Caco-2 (cell line): ENCODE measurements at regions of chr2 and their contacts with region 1.

Region 1: GRCh38 chr2:223860809-223861738 is 23.7 kb upstream of the AP1S3 start:
- DNase-seq: peak; percentile 92 to 94
- H3K4me3 ChIP-seq: no peak overlapping the region
- H3K4me3 Mint-ChIP-seq: peak overlapping the region; percentile 76
- H3K27ac Mint-ChIP-seq: peak overlapping the region; percentile 100
- H3K4me1 ChIP-seq: peaks cover 78% of the 10 kb centered on the region
- H3K4me1 Mint-ChIP-seq: peaks cover 66% of the 10 kb centered on the region
- H3K27me3 ChIP-seq: no peaks in the 10 kb centered on the region
- H3K27me3 Mint-ChIP-seq: no peaks in the 10 kb centered on the region
- CTCF ChIP-seq: peak; percentile 28 to 60

Region 2: GRCh38 chr2:223580951-223581350 is 280.1 kb before region 1 on chr2:
- CTCF ChIA-PET with region 1: no interaction called
- POLR2A ChIA-PET with region 1: no interaction called
- intact Hi-C with region 1: no loop called
- DNase-seq: no peak
- H3K4me3 ChIP-seq: no peak overlapping the region
- H3K4me3 Mint-ChIP-seq: no peak overlapping the region
- H3K27ac Mint-ChIP-seq: no peak overlapping the region
- H3K4me1 ChIP-seq: no peaks in the 10 kb centered on the region
- H3K4me1 Mint-ChIP-seq: no peaks in the 10 kb centered on the region
- H3K27me3 ChIP-seq: no peaks in the 10 kb centered on the region
- H3K27me3 Mint-ChIP-seq: peaks cover 11% of the 10 kb centered on the region
- CTCF ChIP-seq: no peak

Region 3: DNA sequence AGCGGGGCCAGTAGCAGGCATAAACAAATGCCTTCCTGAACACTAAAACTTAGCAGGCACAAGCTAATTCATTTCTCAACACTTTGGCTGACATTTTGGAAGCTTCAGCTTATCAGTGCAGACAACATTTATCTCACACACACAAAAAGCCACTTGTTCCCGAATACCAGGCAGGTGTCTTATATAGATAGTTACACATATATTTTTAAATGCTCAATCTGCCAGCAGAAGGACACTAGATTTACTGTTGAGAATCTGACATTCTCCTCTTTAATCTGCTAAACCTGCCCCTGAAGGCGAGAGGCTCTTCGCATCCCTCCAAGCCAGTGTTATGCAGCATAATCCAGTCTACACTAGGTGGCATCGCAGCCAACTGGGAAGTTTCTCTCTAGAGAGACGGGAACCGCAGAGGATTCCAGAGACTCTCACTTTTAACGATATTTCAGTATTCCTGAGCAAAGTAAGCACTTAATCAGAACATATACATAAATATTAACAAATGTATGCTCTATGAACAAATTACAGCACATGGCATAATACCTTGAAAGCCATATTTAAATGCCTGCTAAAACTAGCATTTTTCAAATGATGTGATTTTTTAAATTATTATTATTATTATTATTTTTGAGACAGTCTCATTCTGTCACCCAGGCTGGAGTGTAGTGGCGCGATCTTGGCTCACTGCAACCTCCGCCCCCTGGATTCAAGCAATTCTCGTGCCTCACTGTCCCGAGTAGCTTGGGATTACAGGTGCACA is 168.7 kb before region 1 on chr2:
- CTCF ChIA-PET with region 1: interaction called, 12 read pairs
- POLR2A ChIA-PET with region 1: no interaction called
- intact Hi-C with region 1: loop called (anchors 1 kb)
- DNase-seq: peak; percentile 71 to 76
- H3K4me3 ChIP-seq: no peak overlapping the region
- H3K4me3 Mint-ChIP-seq: no peak overlapping the region
- H3K27ac Mint-ChIP-seq: no peak overlapping the region
- H3K4me1 ChIP-seq: no peaks in the 10 kb centered on the region
- H3K4me1 Mint-ChIP-seq: no peaks in the 10 kb centered on the region
- H3K27me3 ChIP-seq: no peaks in the 10 kb centered on the region
- H3K27me3 Mint-ChIP-seq: no peaks in the 10 kb centered on the region
- CTCF ChIP-seq: peak; percentile 75 to 96

Region 4: GRCh38 chr2:223760838-223761502 is 100.1 kb before region 1 on chr2:
- CTCF ChIA-PET with region 1: interaction called, 19 read pairs
- POLR2A ChIA-PET with region 1: no interaction called
- intact Hi-C with region 1: loop called (anchors 1 kb)
- DNase-seq: no peak
- H3K4me3 ChIP-seq: no peak overlapping the region
- H3K4me3 Mint-ChIP-seq: no peak overlapping the region
- H3K27ac Mint-ChIP-seq: peak overlapping the region; percentile 94
- H3K4me1 ChIP-seq: peaks cover 42% of the 10 kb centered on the region
- H3K4me1 Mint-ChIP-seq: peaks cover 48% of the 10 kb centered on the region
- H3K27me3 ChIP-seq: no peaks in the 10 kb centered on the region
- H3K27me3 Mint-ChIP-seq: no peaks in the 10 kb centered on the region
- CTCF ChIP-seq: no peak

Region 5: DNA sequence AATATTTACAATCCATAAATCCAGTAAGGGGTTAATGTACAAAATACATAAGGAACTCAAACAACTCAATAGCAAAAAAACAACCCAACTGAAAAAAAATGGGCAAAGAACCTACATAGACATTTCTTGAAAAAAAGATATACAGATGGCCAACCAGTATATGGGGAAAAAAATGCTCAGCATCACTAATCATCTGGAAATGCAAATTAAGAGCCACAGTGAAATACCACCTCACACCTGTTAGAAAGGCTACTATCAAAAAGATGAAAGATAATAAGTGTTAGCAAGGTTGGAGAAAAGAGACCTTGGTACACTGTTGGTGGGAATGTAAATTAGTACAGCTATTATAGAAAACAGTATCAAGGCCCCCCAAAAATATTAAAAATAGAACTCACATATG is 38.3 kb before region 1 on chr2:
- CTCF ChIA-PET with region 1: interaction called, 3 read pairs
- POLR2A ChIA-PET with region 1: no interaction called
- intact Hi-C with region 1: loop called (anchors 5 kb)
- DNase-seq: no peak
- H3K4me3 ChIP-seq: no peak overlapping the region
- H3K4me3 Mint-ChIP-seq: no peak overlapping the region
- H3K27ac Mint-ChIP-seq: no peak overlapping the region
- H3K4me1 ChIP-seq: peaks cover 41% of the 10 kb centered on the region
- H3K4me1 Mint-ChIP-seq: peaks cover 26% of the 10 kb centered on the region
- H3K27me3 ChIP-seq: no peaks in the 10 kb centered on the region
- H3K27me3 Mint-ChIP-seq: no peaks in the 10 kb centered on the region
- CTCF ChIP-seq: no peak

Region 6: DNA sequence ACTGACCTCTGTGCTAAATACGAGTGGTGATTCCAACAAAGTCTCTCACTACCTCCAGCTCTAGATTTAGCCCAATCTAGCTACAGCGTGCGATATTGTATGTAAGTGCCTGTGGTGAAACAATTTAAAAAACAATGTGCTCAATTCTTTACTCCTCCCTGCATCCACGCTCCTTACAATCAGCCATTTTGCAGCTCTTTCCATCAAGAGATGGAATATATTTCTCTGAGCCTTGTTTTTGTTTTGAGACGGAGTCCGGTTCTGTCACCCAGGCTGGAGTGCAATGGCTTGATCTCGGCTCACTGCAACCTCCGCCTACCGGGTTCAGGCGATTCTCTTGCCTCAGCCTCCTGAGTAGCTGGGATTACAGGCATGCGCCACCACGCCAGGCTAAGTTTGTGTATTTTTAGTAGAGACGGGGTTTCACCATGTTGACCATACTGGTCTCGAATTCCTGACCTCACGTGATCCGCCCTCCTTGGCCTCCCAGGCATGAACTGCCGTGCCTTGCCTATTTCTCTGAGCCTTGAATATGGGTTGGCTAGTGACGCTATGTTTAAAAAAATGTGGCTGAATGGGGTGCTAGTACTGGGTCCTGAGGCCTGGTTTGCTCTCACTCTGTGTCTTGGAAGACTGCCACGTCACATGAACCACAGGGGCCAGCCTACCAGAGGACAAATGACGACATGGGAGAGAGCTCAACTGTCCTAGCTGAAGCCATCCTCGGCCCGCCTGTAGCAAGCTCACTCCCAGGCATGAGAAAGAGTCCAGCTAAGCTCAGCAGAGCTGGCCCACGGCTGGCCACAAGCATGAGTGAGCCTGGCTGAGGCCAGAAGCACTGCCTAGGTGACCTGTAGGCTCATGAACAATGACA is 69.3 kb after region 1 on chr2:
- CTCF ChIA-PET with region 1: interaction called, 9 read pairs
- POLR2A ChIA-PET with region 1: no interaction called
- intact Hi-C with region 1: loop called (anchors 1 kb)
- DNase-seq: peak; percentile 94 to 97
- H3K4me3 ChIP-seq: peak overlapping the region; percentile 24
- H3K4me3 Mint-ChIP-seq: peak overlapping the region; percentile 85
- H3K27ac Mint-ChIP-seq: peak overlapping the region; percentile 99
- H3K4me1 ChIP-seq: peaks cover 58% of the 10 kb centered on the region
- H3K4me1 Mint-ChIP-seq: peaks cover 39% of the 10 kb centered on the region
- H3K27me3 ChIP-seq: no peaks in the 10 kb centered on the region
- H3K27me3 Mint-ChIP-seq: no peaks in the 10 kb centered on the region
- CTCF ChIP-seq: no peak